ENCODE measurements at regions of chr20 and their contacts with region 1.

Region 1: GRCh38 chr20:35541783-35542588 is at the start of gene ERGIC3:
- DNase-seq: peak; percentile 98
- H3K4me3 ChIP-seq: peak within 1 kb of the TSS; percentile 68 to 88 (median 80)
- H3K27ac ChIP-seq: peak within 1 kb of the TSS; percentile 67 to 77 (median 72)
- H3K4me1 ChIP-seq: peaks cover 0 to 15% (median 14%) of the 10 kb centered on the region in 4 donors
- H3K27me3 ChIP-seq: no peaks in the 10 kb centered on the region
- CTCF ChIP-seq: no peak
- EP300 ChIP-seq: no peak
- POLR2A ChIP-seq: peak in 1 of 2 donors; percentile 20
- total RNA-seq, gene ERGIC3: 141 to 230 (median 195) TPM

Region 2: DNA sequence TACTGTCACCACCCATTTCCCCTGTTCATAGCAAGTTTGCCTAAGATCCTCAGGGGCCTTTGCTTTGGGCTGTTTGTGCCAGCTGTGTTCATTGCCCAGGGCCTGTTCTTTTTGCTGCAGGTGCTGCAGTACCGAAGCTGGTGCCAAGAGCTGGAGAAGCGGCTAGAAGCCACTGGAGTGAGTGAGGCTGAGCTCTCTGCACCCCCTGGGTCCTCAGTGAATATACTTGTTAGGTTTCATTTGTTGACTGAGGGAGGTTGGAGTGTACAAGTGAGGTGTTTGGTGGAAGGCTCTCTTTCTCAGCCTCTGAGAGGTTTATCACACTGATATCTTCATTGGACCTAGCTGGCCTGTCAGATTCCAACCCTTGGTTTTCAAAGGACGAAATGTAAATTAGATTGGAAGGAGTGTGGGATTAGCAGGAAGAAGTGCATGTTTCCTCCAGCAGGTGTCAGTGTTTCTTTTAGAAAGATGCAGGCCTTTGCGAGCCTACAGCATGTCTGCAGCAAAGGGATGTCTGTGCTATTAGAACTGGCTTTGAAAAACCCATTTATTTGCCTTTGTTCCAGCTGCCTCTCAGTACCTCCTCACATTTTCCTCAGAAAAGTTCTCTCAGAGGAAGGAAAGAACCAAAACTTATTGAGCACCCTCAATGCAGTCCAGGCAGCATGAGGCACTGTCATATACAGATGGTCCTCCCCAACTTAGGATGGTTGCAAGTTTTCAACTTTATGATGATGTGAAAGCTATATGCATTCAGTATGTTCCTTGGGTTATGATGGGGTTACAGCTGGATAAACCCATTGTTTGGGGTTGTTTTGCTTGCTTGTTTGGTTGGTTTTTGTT is 78.3 kb before region 1 on chr20:
- intact Hi-C with region 1: loop called (anchors 5 kb)
- DNase-seq: no peak
- H3K4me3 ChIP-seq: no peak overlapping the region
- H3K27ac ChIP-seq: no peak overlapping the region
- H3K4me1 ChIP-seq: peaks cover 0 to 5% (median 0%) of the 10 kb centered on the region in 4 donors
- H3K27me3 ChIP-seq: no peaks in the 10 kb centered on the region
- CTCF ChIP-seq: peak; percentile 38 to 77 (median 72)
- EP300 ChIP-seq: no peak
- POLR2A ChIP-seq: no peak

Measured in sigmoid colon (tissue), 7 donors.